Gastrocnemius medialis (tissue), 4 donors: ENCODE measurements at regions of chr21 and their contacts with region 1.

Region 1: DNA sequence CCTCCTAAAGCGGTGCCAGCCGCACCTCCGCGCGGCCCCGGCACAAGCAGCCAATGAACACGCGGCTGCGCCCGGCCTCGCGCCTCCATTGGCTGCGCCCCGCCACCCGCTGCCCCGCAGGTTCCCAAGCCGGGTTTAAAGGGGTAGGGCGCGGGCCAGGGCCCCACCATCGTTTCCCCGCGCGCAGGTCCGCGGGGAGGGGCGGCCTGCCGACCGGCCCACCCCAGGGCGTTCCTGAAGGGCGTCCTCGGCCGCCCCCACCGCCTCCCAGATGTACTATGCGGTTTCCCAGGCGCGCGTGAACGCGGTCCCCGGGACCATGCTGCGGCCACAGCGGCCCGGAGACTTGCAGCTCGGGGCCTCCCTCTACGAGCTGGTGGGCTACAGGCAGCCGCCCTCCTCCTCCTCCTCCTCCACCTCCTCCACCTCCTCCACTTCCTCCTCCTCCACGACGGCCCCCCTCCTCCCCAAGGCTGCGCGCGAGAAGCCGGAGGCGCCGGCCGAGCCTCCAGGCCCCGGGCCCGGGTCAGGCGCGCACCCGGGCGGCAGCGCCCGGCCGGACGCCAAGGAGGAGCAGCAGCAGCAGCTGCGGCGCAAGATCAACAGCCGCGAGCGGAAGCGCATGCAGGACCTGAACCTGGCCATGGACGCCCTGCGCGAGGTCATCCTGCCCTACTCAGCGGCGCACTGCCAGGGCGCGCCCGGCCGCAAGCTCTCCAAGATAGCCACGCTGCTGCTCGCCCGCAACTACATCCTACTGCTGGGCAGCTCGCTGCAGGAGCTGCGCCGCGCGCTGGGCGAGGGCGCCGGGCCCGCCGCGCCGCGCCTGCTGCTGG is at the start of gene OLIG1:
- DNase-seq: peak in 1 of 2 donors; percentile 19
- ATAC-seq: peak; percentile 79 to 80
- H3K4me3 ChIP-seq: peak within 1 kb of the TSS; percentile 52 to 62 (median 58)
- H3K27ac ChIP-seq: peak within 1 kb of the TSS in 3 of 4 donors; percentile 21 to 73 (median 49)
- H3K4me1 ChIP-seq: peaks cover 8 to 10% of the 10 kb centered on the region in 2 donors
- H3K27me3 ChIP-seq: peaks cover 39 to 70% (median 61%) of the 10 kb centered on the region in 3 donors
- CTCF ChIP-seq: no peak
- POLR2A ChIP-seq: peak in 1 of 2 donors; percentile 75
- total RNA-seq, gene OLIG1: 1.4 TPM in 2 of 4 donors, not detected in the others

Region 2: DNA sequence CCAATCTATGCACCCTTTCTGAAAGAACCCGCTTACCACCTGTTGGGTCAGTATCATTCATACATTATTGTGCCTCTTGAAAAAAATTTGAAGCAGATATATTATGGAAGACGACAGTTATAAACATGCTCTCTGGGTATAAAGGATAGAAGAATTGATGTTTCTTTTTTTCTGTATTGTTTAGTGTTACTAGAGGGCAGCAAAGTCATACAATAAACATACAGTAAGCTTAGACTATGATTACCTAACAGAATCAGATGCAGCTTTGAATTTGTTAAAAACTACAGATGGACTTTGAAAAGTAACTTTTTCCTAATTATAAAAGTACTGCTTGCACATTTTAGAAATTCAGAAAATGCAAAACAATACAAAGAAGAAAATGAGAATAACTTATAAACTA is 287.5 kb before region 1 on chr21:
- in situ Hi-C with region 1: no loop called
- intact Hi-C with region 1: no loop called
- DNase-seq: no peak
- ATAC-seq: no peak
- H3K4me3 ChIP-seq: no peak overlapping the region
- H3K27ac ChIP-seq: no peak overlapping the region
- H3K4me1 ChIP-seq: no peaks in the 10 kb centered on the region
- H3K27me3 ChIP-seq: no peaks in the 10 kb centered on the region
- CTCF ChIP-seq: no peak
- POLR2A ChIP-seq: no peak

Region 3: GRCh38 chr21:33011462-33011861 is 58.7 kb before region 1 on chr21:
- in situ Hi-C with region 1: no loop called
- intact Hi-C with region 1: loop called (anchors 5 kb)
- DNase-seq: peak; percentile 51 to 70
- ATAC-seq: peak; percentile 96 to 97
- H3K4me3 ChIP-seq: no peak overlapping the region
- H3K27ac ChIP-seq: peak overlapping the region in 3 of 4 donors; percentile 60 to 70 (median 61)
- H3K4me1 ChIP-seq: no peaks in the 10 kb centered on the region
- H3K27me3 ChIP-seq: peaks cover 0 to 5% (median 5%) of the 10 kb centered on the region in 3 donors
- CTCF ChIP-seq: no peak
- POLR2A ChIP-seq: peak in 1 of 2 donors; percentile 10

Region 4: DNA sequence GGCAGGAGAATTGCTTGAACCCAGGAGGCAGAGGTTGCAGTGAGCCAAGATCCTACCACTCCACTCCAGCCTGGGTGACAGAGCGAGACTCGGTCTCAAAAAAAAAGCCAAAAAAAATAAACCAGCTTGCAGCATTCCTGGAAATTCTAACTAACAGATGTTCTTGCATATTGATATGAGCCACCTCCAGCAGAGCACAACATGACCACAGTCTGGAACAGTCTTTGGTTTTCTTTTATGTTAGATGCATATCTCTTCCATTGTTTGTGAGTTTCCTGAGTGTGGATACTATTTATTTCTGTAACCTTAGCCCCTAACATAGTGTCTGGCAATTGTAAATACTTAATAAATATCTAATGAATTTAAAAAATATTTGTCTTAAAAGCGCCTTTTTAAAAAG is 278.5 kb after region 1 on chr21:
- in situ Hi-C with region 1: no loop called
- intact Hi-C with region 1: no loop called
- DNase-seq: no peak
- ATAC-seq: no peak
- H3K4me3 ChIP-seq: no peak overlapping the region
- H3K27ac ChIP-seq: peak overlapping the region in 1 of 4 donors; percentile 8
- H3K4me1 ChIP-seq: no peaks in the 10 kb centered on the region
- H3K27me3 ChIP-seq: no peaks in the 10 kb centered on the region
- CTCF ChIP-seq: no peak
- POLR2A ChIP-seq: no peak